Calu3 (cell line): ENCODE measurements at regions of chr16 and their contacts with region 1.

Region 1: GRCh38 chr16:10918294-10919002 is 23.8 kb downstream of the DEXI start:
- DNase-seq: peak; percentile 95
- H3K4me3 Mint-ChIP-seq: no peak overlapping the region
- H3K27ac Mint-ChIP-seq: no peak overlapping the region
- H3K4me1 Mint-ChIP-seq: peaks cover 8% of the 10 kb centered on the region
- H3K27me3 Mint-ChIP-seq: no peaks in the 10 kb centered on the region
- CTCF ChIP-seq: peak; percentile 93

Region 2: GRCh38 chr16:10521681-10522274 is 396.7 kb before region 1 on chr16:
- CTCF ChIA-PET with region 1: no interaction called
- intact Hi-C with region 1: loop called (anchors 5 kb)
- DNase-seq: peak; percentile 78
- H3K4me3 Mint-ChIP-seq: no peak overlapping the region
- H3K27ac Mint-ChIP-seq: no peak overlapping the region
- H3K4me1 Mint-ChIP-seq: peaks cover 12% of the 10 kb centered on the region
- H3K27me3 Mint-ChIP-seq: no peaks in the 10 kb centered on the region
- CTCF ChIP-seq: peak; percentile 80

Region 3: DNA sequence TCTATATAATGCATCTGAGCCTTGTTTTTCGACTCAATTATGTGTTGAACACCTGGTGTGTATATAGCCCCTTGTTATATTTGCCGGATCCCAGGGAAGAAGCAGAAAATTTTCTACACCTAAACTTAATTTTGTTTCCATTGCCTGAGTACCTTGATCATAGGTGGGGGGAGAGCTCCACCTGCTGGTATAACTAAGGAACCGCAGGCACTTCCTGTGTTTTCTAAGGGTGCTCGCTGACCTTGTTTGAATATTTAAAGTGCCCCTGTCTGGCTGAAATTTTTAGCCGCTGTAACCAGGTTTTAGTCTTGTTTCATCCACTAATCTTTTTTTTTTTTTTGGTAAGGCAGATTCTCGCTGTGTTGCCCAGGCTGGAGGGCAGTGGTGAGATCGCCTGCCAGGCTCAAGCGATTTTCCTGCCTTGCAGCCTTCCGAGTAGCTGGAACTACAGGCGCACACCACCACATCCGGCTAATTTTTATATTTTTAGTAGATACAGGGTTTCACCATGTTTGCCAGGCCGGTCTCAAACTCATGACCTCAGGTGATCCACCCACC is 181.3 kb before region 1 on chr16:
- CTCF ChIA-PET with region 1: interaction called, 13 read pairs
- intact Hi-C with region 1: loop called (anchors 2 kb)
- DNase-seq: peak; percentile 79
- H3K4me3 Mint-ChIP-seq: peak overlapping the region; percentile 29
- H3K27ac Mint-ChIP-seq: peak overlapping the region; percentile 19
- H3K4me1 Mint-ChIP-seq: peaks cover 35% of the 10 kb centered on the region
- H3K27me3 Mint-ChIP-seq: no peaks in the 10 kb centered on the region
- CTCF ChIP-seq: peak; percentile 94

Region 4: DNA sequence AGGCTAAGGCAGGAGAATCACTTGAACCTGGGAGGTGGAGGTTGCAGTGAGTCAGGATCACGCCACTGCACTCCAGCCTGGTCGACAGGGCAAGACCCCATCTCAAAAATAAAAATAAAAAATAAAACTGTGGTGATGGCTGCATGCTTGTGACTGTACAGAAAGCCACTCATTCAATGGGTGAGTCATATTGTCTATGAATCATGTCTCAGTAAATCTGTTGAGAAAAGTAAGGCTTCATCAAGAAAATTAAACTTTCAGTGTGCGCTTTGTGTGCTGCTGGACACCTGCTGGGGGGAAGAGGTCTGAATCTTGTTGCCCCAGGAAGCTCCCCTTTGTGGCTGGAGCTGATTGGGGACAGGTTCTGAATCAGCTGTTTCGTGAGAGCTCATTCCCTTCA is 163.5 kb before region 1 on chr16:
- CTCF ChIA-PET with region 1: interaction called, 4 read pairs
- intact Hi-C with region 1: loop called (anchors 5 kb)
- DNase-seq: no peak
- H3K4me3 Mint-ChIP-seq: no peak overlapping the region
- H3K27ac Mint-ChIP-seq: no peak overlapping the region
- H3K4me1 Mint-ChIP-seq: peaks cover 7% of the 10 kb centered on the region
- H3K27me3 Mint-ChIP-seq: no peaks in the 10 kb centered on the region
- CTCF ChIP-seq: no peak

Region 5: DNA sequence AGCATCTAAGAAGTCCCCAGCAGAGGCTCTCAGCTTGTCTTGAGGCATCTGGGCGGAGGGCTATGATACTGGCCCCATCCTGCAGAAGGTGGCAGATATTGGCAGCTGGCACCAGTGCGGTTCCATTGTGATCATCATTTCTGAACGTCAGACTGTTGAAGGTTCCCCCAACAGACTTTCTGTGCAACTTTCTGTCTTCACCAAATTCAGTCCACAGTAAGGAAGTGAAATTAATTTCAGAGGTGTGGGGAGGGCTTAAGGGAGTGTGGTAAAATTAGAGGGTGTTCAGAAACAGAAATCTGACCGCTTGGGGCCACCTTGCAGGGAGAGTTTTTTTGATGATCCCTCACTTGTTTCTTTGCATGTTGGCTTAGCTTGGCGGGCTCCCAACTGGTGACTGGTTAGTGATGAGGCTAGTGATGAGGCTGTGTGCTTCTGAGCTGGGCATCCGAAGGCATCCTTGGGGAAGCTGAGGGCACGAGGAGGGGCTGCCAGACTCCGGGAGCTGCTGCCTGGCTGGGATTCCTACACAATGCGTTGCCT is 41.6 kb before region 1 on chr16 and contains the start of gene CIITA:
- CTCF ChIA-PET with region 1: interaction called, 8 read pairs
- intact Hi-C with region 1: loop called (anchors 2 kb)
- DNase-seq: peak; percentile 71
- H3K4me3 Mint-ChIP-seq: peak within 1 kb of the TSS; percentile 96
- H3K27ac Mint-ChIP-seq: peak within 1 kb of the TSS; percentile 34
- H3K4me1 Mint-ChIP-seq: peaks cover 62% of the 10 kb centered on the region
- H3K27me3 Mint-ChIP-seq: no peaks in the 10 kb centered on the region
- CTCF ChIP-seq: no peak
- total RNA-seq, gene CIITA: 16.3 and 22.4 TPM in 2 replicates

Region 6: GRCh38 chr16:11066231-11066870 is 147.9 kb after region 1 on chr16:
- CTCF ChIA-PET with region 1: no interaction called
- intact Hi-C with region 1: no loop called
- DNase-seq: no peak
- H3K4me3 Mint-ChIP-seq: no peak overlapping the region
- H3K27ac Mint-ChIP-seq: no peak overlapping the region
- H3K4me1 Mint-ChIP-seq: no peaks in the 10 kb centered on the region
- H3K27me3 Mint-ChIP-seq: no peaks in the 10 kb centered on the region
- CTCF ChIP-seq: no peak